Endothelial cell of umbilical vein (primary cell): ENCODE measurements at regions of chrX and their contacts with region 1.

Region 1: DNA sequence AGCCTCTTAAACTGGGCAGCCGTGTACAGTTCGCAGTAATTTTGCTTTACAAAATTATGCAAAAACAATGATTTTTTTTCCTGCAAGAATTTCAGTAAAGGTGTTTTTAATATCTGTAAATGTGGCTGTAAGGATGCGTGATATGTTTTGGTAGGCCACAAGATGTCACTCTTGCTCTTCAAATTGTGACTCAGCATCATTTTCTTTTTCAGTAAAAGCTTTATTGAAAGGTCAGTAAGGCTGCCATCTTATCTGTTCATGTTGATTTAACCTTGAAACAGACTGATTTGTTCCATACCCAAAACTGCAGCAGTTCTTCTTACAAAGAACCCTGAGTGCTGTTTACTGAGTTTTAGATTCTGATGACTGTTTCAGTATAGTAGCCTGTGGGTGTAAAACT is 39.9 kb downstream of the TXLNG start:
- DNase-seq: peak; percentile 50
- H3K4me3 ChIP-seq: no peak overlapping the region
- H3K27ac ChIP-seq: peak overlapping the region; percentile 25
- H3K4me1 ChIP-seq: peaks cover 38% of the 10 kb centered on the region
- H3K27me3 ChIP-seq: no peaks in the 10 kb centered on the region
- CTCF ChIP-seq: peak; percentile 12 to 27
- POLR2A ChIP-seq: no peak

Region 2: DNA sequence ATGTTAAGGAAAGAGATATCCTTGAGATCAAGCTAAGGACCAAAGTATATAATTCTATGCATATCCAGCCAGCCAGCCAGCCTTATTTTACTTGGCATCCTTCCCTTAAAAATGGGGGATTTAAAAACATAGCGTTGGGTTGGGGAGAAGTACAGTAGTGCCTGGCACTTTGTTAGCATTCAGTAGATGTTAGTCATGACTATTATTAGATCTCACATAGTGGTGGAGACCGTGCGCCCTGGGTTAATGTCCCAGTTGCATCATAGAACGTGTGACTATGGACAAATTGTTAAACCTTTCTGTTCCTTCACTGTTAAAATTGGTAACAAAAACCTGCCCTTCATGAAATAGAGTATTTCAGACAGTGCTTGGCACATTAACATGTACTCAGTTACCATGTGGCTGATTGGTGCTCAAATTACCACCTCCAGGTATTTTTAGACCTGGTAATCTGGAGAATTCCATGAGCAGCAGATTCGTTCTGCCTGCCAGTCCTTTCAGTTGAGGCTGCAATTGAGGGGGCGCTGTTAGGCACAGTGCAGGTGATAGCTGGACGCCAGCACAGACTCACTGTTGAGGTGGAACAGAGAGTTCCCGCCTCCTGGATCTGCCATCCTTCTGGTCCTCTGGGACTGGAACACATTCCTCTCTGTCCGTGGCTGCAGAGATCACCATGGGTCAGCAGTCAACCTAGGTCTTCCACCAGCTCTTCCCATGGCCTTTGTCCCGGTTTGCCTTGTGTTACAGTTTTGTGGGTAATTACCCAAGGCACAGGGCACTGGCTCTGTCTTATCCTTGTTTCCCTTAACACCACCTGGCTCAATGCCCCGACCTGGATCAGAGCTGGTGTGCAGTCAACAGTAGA is 12.2 kb after region 1 on chrX:
- CTCF ChIA-PET with region 1: interaction called, 12 read pairs
- POLR2A ChIA-PET with region 1: no interaction called
- dilution Hi-C with region 1: no loop called
- intact Hi-C with region 1: loop called (anchors 1 kb)
- DNase-seq: peak; percentile 85
- H3K4me3 ChIP-seq: no peak overlapping the region
- H3K27ac ChIP-seq: peak overlapping the region; percentile 84
- H3K4me1 ChIP-seq: peaks cover 20% of the 10 kb centered on the region
- H3K27me3 ChIP-seq: no peaks in the 10 kb centered on the region
- CTCF ChIP-seq: no peak
- POLR2A ChIP-seq: no peak

Region 3: DNA sequence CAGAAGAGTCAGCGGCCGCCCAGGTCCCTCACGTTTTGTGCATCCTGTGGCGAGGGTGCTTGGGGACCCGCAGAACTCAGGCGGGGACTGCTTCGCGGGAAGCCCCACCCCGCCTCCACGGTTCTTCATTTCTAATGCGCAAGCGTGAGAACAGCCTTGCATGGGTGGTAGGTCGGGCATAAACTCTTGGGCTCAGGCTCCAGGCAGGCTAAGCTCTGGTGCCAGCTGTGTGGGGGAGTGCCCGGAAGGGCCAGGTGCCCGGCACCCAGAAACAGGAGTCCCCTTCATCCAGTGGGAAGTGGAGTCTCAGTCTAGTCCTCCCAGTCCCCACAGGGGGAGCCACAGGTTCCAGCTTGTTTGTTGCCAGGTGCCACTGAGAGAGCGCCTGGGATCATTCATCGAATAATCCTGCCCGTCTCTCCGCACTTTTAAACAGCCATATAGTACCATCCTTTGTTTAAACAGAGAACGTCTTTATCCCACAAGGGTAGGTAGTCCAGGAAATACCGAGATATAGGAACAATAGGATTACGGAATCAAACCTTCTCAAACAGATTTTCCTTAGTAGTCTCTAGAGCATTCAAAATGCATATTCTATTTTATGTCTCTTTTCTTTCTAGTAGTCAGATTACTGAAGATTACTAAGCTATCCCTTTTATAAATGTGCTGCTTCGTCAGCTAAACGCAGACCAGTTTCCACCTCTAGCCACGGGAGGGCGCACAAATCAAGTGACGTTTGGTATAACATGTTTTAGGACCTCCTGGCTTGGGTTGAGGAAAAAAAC is 56.7 kb after region 1 on chrX:
- CTCF ChIA-PET with region 1: interaction called, 47 read pairs
- POLR2A ChIA-PET with region 1: no interaction called
- dilution Hi-C with region 1: no loop called
- intact Hi-C with region 1: loop called (anchors 1 kb)
- DNase-seq: peak; percentile 73
- H3K4me3 ChIP-seq: peak overlapping the region; percentile 40 to 73 (median 61)
- H3K27ac ChIP-seq: peak overlapping the region; percentile 55
- H3K4me1 ChIP-seq: peaks cover 11% of the 10 kb centered on the region
- H3K27me3 ChIP-seq: no peaks in the 10 kb centered on the region
- CTCF ChIP-seq: peak; percentile 51 to 59
- POLR2A ChIP-seq: no peak

Region 4: GRCh38 chrX:16946361-16946964 is 120.3 kb after region 1 on chrX and contains the start of gene REPS2:
- CTCF ChIA-PET with region 1: no interaction called
- POLR2A ChIA-PET with region 1: no interaction called
- dilution Hi-C with region 1: no loop called
- intact Hi-C with region 1: loop called (anchors 2 kb)
- DNase-seq: peak; percentile 56
- H3K4me3 ChIP-seq: peak within 1 kb of the TSS; percentile 41 to 65 (median 56)
- H3K27ac ChIP-seq: no peak within 1 kb of the TSS
- H3K4me1 ChIP-seq: peaks cover 3% of the 10 kb centered on the region
- H3K27me3 ChIP-seq: peaks cover 0 to 3% of the 10 kb centered on the region in 2 experiments
- CTCF ChIP-seq: no peak
- POLR2A ChIP-seq: no peak
- total RNA-seq, gene REPS2: 2.6 and 4.9 TPM in 2 replicates

Region 5: DNA sequence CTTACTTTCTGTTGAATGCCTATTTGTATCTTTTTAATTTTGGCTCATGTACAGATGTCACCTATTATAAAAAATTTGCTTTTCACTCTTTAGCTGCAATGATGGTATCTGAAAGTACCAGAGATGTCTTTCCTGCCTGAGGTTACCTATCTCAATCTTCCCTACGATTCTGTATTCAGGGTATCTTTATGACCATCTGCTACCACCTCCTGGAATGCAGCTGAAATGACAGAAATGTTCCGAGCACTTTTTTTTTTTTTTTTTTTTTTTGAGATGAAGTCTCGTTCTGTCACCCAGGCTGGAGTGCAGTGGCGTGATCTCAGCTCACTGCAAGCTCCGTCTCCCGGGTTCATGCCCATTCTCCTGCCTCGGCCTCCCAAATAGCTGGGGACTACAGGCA is 256.6 kb after region 1 on chrX:
- CTCF ChIA-PET with region 1: interaction called, 29 read pairs
- POLR2A ChIA-PET with region 1: no interaction called
- dilution Hi-C with region 1: no loop called
- intact Hi-C with region 1: loop called (anchors 5 kb)
- DNase-seq: peak; percentile 3
- H3K4me3 ChIP-seq: no peak overlapping the region
- H3K27ac ChIP-seq: no peak overlapping the region
- H3K4me1 ChIP-seq: peaks cover 8% of the 10 kb centered on the region
- H3K27me3 ChIP-seq: no peaks in the 10 kb centered on the region
- CTCF ChIP-seq: no peak
- POLR2A ChIP-seq: no peak

Region 6: DNA sequence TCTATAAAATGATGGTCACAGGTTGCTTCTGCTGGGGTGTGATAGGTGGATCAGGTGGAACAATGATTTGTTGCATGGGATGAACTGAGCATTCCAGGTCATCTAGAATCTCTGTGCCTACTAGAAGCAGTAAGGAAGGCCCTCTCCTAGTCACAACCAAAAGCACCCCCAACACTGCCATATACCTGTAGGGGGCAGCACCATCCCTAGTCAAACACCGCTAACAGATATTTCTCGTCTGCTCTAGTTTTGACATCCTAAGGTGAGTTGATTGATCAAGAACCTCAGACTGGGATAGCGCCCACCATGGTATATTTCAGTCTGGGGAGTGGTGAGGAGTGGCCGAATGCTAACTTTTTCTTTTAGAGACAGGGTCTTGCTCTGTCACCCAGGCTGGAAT is 709.0 kb after region 1 on chrX:
- CTCF ChIA-PET with region 1: no interaction called
- POLR2A ChIA-PET with region 1: no interaction called
- dilution Hi-C with region 1: no loop called
- intact Hi-C with region 1: loop called (anchors 5 kb)
- DNase-seq: peak; percentile 49
- H3K4me3 ChIP-seq: no peak overlapping the region
- H3K27ac ChIP-seq: no peak overlapping the region
- H3K4me1 ChIP-seq: no peaks in the 10 kb centered on the region
- H3K27me3 ChIP-seq: peaks cover 0 to 2% of the 10 kb centered on the region in 2 experiments
- CTCF ChIP-seq: peak; percentile 45 to 51
- POLR2A ChIP-seq: no peak